Cardiac septum (tissue), 1 donor: ENCODE measurements at regions of chr12 and their contacts with region 1.

Region 1: DNA sequence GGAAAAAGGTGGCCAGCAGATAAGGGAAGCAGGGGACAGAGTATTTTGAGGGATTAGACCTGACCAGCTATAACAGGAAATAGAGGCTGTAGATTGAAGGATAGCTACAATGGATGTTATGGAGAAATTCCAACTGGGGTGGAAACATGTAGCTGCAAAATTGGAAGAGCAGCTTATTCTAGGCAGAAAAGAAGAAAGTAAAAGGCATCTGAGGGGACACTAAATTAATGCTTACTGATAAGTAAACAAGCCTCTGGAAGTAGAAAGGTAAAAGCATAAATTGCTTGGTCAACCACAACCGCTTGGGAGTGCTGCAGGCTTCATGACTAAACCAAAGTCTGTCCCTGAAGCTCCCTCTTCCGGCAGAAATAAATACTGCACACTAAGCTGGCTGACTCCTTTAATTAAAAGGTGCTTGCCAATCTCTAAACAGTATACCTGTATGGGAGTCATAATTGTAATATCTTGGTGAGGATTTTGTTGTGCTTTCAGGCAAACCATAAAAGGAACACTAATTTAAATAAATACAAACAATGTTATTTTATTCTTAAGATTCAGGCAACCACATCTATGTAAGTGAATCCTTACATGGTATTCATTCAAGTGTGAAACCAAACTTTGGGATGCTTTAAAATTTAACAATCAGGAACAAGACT is 7.7 kb downstream of the UBC start:
- DNase-seq: peak; percentile 87

Region 2: GRCh38 chr12:124771462-124772288 is 135.1 kb before region 1 on chr12:
- intact Hi-C with region 1: no loop called
- DNase-seq: peak; percentile 90

Region 3: DNA sequence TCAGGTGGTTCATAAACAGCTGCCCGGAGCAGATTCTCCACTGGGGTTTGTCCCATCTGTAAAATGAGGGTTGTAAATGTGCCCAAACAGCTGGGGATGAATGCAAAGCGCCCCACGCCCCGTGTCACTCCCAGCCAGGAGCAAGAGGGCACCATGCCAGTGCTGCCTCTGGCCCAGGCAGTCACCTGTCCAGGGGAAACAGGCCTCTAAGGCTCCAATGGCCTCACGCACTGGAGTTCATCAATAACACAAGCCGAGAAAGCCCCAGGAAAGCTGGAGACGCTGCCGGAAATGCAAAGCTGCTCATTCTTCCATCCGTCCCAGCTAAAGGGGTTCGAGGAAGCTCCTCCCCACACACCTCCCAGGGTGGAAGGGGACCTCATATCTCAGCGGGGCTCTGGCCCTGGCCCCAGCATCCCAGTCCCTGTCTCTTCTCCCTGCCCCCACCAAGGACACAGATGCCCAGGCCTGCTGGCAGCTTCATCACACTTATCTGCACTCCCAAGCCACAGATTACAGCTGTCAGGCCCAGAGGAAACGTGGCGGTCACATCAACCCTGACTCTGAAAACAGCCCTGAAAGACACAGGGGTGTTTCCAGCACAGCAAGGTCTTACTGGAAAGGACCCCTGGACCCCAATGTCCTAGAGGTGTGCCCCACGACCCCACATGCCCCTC is 64.5 kb before region 1 on chr12:
- intact Hi-C with region 1: loop called (anchors 5 kb)
- DNase-seq: no peak

Region 4: DNA sequence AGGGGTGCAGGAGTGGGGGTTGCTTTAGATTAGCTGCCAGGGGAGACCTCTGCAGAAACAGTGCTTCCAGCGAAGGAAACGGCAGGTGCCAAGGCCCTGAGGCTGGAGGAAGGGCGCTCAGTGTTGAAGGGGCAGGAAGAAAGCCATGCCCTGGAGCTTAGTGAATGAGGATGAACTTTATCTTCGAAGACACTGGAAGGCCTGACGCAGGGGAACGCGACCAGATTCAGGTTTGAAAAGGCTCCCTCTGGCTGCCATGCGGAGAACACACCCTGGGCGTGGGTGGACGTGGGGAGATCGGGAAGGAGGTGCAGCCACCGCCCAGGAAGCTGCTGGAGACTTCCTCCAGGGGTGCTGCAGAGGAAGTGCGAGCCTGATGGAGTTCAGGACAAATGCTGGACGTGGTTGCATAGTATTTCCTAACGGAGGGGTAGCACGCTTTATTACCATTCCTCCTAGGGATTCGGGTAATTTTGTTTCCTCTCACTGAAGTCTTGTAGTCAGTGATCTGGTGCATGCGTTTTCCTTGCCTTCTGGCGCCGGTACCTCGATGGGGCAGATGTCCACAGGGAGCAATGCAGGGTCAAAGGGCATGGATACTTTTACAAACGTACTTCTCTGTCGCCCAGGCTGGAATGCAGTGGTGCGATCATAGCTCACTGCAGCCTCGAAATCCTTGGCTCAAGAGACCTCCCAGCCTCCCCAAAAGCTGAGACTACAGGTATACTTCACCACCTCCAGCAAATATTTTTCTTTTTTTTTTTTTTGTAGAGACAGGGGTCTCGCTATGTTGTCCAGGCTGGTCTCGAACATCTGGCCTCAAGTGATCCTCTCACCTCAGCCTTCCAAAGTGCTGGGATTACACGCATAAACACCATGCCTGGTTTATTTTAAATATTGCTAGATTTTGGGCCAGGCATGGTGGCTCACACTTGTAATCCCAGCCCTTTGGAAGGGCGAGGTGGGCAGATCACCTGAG is 34.1 kb after region 1 on chr12:
- intact Hi-C with region 1: loop called (anchors 1 kb)
- DNase-seq: peak; percentile 96